Heart right ventricle (tissue), 16 donors: ENCODE measurements at regions of chrX and their contacts with region 1.

Region 1: DNA sequence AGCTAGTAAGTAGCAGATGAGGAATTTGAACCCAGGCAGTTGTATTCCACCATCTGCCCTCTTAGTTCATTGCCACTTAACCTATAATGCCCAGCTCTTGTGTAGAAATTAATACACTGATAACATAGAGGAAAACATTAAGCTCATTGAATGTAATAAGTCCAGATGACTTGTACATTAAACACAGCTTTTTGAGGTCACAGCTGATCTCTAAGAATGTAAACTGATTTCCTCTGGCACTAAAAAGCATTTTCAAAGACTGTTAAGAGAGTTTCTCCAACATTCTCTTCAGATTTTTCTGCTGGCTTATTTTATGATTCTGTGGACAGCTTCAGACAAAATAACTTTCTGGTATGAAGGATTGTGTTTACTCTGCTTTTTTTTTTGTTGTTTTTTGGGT is 42.7 kb downstream of the HPRT1 start:
- DNase-seq: no peak
- ATAC-seq: no peak
- H3K4me3 ChIP-seq: no peak overlapping the region
- H3K27ac ChIP-seq: no peak overlapping the region
- H3K4me1 ChIP-seq: no peaks in the 10 kb centered on the region
- H3K27me3 ChIP-seq: no peaks in the 10 kb centered on the region
- CTCF ChIP-seq: no peak

Region 2: GRCh38 chrX:134634691-134635090 is 132.0 kb after region 1 on chrX:
- intact Hi-C with region 1: no loop called
- DNase-seq: no peak
- ATAC-seq: no peak
- H3K4me3 ChIP-seq: no peak overlapping the region
- H3K27ac ChIP-seq: no peak overlapping the region
- H3K4me1 ChIP-seq: peaks cover 0 to 10% (median 0%) of the 10 kb centered on the region in 9 donors
- H3K27me3 ChIP-seq: peaks cover 0 to 21% (median 0%) of the 10 kb centered on the region in 7 donors
- CTCF ChIP-seq: no peak

Region 3: DNA sequence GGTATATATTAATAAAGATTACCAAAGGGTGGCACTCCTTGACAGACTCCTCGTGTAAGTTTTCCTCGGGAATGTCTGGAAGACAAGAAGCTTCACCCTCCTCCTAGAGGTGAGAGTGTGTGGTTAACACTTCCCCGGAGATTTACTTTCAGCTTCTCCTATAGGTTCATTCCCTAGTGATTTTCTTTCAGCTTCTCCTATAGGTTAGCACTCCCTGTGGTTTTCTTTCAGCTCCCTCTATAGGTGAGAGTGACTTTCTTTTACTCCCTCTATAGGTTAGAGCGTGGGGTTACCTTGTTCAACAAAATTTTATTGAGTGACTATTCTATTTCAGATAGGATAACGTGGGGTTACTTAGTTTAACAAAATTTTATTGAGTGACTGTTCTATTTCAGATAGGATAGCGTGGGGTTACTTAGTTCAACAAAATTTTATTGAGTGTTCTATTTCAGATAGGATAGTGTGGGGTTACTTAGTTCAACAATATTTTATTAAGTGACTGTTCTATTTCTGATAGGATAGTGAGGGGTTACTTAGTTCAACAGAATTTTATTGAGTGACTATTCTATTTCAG is 261.6 kb after region 1 on chrX:
- intact Hi-C with region 1: loop called in 1 of 10 experiments (anchors 10 kb)
- DNase-seq: no peak
- ATAC-seq: no peak
- H3K4me3 ChIP-seq: no peak overlapping the region
- H3K27ac ChIP-seq: no peak overlapping the region
- H3K4me1 ChIP-seq: no peaks in the 10 kb centered on the region
- H3K27me3 ChIP-seq: peaks cover 0 to 5% (median 0%) of the 10 kb centered on the region in 7 donors
- CTCF ChIP-seq: peak in 1 of 9 donors; percentile 11

Region 4: DNA sequence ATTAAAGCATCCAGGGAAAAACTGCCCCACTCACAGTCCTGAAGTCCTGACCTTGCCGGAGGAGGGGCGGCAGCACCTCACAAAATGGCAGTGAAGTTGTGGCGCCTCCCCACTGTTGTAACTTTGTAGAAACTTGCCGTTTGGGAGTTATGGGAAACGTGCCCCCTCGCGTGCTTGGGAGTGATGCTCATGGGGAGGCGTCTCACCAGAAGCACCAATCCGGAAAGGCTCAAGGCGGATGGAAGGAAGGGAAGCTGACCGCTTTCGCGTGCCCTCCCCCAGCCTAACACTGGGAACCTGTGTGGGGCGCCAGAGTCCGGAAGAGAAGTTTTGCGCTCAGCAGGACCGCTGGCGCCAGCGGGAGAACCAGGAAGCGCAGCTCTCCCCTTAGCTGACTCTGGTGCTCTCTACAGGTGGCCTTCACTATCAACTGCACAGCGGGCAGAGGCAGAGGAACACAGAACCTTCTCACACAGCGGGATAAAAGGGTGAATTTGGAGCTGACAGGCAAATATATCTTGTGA is 1390.7 kb after region 1 on chrX and contains the starts of genes CT45A10 and SAGE1:
- intact Hi-C with region 1: no loop called
- DNase-seq: no peak
- ATAC-seq: no peak
- H3K4me3 ChIP-seq: no peak within 1 kb of the TSS
- H3K27ac ChIP-seq: no peak within 1 kb of the TSS
- H3K4me1 ChIP-seq: no peaks in the 10 kb centered on the region
- H3K27me3 ChIP-seq: no peaks in the 10 kb centered on the region
- CTCF ChIP-seq: no peak
- total RNA-seq, gene CT45A10: not detected
- total RNA-seq, gene SAGE1: not detected